Heart right ventricle (tissue), 16 donors: ENCODE measurements at regions of chr12 and their contacts with region 1.

Region 1: GRCh38 chr12:39685854-39686657 is 66.5 kb upstream of the ABCD2 start:
- DNase-seq: no peak
- ATAC-seq: no peak
- H3K4me3 ChIP-seq: no peak overlapping the region
- H3K27ac ChIP-seq: no peak overlapping the region
- H3K4me1 ChIP-seq: no peaks in the 10 kb centered on the region
- H3K27me3 ChIP-seq: no peaks in the 10 kb centered on the region
- CTCF ChIP-seq: no peak

Region 2: DNA sequence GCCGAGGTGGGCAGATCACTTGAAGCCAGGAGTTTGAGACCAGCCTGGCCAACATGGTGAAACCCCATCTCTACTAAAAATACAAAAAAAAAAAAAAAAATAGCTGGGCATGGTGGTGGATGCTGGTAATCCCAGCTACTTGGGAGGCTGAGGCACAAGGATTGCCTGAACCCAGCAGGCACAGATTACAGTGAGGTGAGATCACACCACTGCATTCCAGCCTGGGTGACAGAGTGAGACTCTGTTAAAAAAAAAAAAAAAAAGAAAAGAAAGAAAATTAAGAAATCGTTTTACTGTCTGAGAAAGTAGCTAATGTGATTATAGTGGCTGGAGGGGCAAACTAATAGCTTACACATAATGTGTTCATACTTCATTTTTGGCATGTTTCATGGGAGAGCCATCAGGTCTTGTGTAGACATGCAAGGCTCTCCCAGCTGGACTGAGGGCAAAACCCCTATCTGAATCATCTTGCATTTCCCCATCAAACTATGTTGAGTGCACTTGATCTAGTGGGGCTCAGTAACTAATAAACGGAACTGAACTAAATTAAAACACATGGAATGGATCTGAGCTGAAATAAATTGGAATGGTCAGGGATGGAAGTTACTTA is 259.3 kb before region 1 on chr12:
- intact Hi-C with region 1: no loop called
- DNase-seq: no peak
- ATAC-seq: no peak
- H3K4me3 ChIP-seq: no peak overlapping the region
- H3K27ac ChIP-seq: no peak overlapping the region
- H3K4me1 ChIP-seq: peaks cover 0 to 24% (median 6%) of the 10 kb centered on the region in 9 donors
- H3K27me3 ChIP-seq: no peaks in the 10 kb centered on the region
- CTCF ChIP-seq: no peak

Region 3: DNA sequence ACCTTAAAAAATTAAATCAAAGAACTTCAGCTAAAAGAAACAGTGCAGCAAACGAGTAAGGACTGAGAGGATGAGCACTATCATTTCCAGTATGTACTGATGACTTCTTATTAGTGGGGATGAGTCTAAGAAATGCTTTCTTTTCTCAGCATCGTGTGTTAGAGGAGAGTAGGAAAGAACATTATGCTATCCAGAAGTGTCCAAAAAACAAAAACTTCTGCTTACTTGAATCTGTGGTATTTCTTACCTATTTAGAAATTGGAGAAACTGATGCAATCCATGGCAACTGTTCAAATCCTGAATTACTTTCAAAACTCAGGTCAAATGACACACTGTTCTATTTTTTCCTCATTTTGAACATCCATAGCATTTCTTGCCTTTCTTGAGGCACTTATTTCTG is 90.1 kb before region 1 on chr12:
- intact Hi-C with region 1: loop called in 3 of 10 experiments (anchors 5 to 10 kb)
- DNase-seq: no peak
- ATAC-seq: no peak
- H3K4me3 ChIP-seq: no peak overlapping the region
- H3K27ac ChIP-seq: no peak overlapping the region
- H3K4me1 ChIP-seq: no peaks in the 10 kb centered on the region
- H3K27me3 ChIP-seq: no peaks in the 10 kb centered on the region
- CTCF ChIP-seq: no peak

Region 4: GRCh38 chr12:39788235-39788634 is 102.2 kb after region 1 on chr12:
- intact Hi-C with region 1: no loop called
- DNase-seq: no peak
- ATAC-seq: no peak
- H3K4me3 ChIP-seq: no peak overlapping the region
- H3K27ac ChIP-seq: no peak overlapping the region
- H3K4me1 ChIP-seq: no peaks in the 10 kb centered on the region
- H3K27me3 ChIP-seq: no peaks in the 10 kb centered on the region
- CTCF ChIP-seq: no peak